ENCODE measurements at regions of chrX and their contacts with region 1.

Region 1: DNA sequence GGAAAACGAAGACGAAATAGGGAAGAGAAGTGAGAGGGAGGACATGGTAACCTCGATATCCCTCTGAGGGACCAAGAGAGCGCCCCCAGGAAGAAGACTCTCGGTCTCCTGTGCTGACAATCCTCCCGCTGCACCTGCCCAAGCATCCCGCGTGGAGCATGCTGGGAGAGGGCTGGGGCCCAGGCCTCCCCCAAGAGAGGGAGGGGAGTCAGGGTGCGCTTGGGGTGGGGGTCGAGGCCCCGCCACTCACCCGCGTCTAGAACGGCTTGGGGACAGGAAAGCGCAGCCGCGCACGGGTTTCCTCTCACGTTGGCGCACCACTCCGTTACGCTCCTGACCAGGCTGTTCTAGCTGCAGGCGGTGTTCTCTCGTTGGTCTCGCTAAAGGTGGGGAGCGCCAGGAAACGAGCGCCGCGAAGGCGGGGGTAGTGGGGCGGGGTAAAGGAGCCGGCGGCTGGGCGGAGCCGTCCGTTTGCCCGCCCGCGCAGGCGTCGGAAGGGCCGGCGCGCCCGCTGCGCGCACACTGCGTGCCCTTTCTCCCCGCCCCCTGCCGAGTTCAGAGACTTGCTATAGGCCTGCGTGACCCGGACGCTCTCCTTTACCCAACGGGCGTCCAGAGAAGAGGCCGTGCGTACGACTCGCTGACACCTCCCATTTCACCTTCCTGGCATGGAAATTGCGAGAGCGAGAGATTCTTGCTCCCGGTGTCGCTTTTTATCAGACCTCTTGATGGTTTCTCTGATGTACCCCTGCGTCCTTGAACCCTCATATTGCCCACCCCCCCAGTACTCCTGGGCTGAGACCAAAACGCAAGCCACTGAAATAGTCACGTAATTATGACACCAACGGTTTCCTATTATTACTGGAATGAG is at the start of gene C1GALT1C1:
- DNase-seq: peak; percentile 83 to 97 (median 90)
- ATAC-seq: peak; percentile 89
- H3K4me3 ChIP-seq: peak within 1 kb of the TSS; percentile 89
- H3K4me3 Mint-ChIP-seq: peak within 1 kb of the TSS; percentile 99
- H3K27ac ChIP-seq: peak within 1 kb of the TSS; percentile 89 to 95
- H3K27ac Mint-ChIP-seq: peak within 1 kb of the TSS; percentile 98
- H3K4me1 ChIP-seq: peaks cover 14% of the 10 kb centered on the region
- H3K4me1 Mint-ChIP-seq: peaks cover 23% of the 10 kb centered on the region
- H3K27me3 ChIP-seq: no peaks in the 10 kb centered on the region
- H3K27me3 Mint-ChIP-seq: no peaks in the 10 kb centered on the region
- CTCF ChIP-seq: no peak
- total RNA-seq, gene C1GALT1C1: 2.3 to 3.3 TPM

Region 2: GRCh38 chrX:119235872-119236622 is 1393.9 kb before region 1 on chrX and contains the start of gene PGRMC1:
- CTCF ChIA-PET with region 1: no interaction called
- POLR2A ChIA-PET with region 1: no interaction called
- intact Hi-C with region 1: loop called in 1 of 2 experiments (anchors 5 kb)
- DNase-seq: peak; percentile 61 to 91 (median 78)
- ATAC-seq: peak; percentile 94
- H3K4me3 ChIP-seq: peak within 1 kb of the TSS; percentile 73
- H3K4me3 Mint-ChIP-seq: peak within 1 kb of the TSS; percentile 92
- H3K27ac ChIP-seq: peak within 1 kb of the TSS in 1 of 2 donors; percentile 53
- H3K27ac Mint-ChIP-seq: peak within 1 kb of the TSS; percentile 57
- H3K4me1 ChIP-seq: peaks cover 21% of the 10 kb centered on the region
- H3K4me1 Mint-ChIP-seq: peaks cover 38% of the 10 kb centered on the region
- H3K27me3 ChIP-seq: no peaks in the 10 kb centered on the region
- H3K27me3 Mint-ChIP-seq: no peaks in the 10 kb centered on the region
- CTCF ChIP-seq: no peak
- total RNA-seq, gene PGRMC1: 14.9 to 16.0 TPM

Region 3: DNA sequence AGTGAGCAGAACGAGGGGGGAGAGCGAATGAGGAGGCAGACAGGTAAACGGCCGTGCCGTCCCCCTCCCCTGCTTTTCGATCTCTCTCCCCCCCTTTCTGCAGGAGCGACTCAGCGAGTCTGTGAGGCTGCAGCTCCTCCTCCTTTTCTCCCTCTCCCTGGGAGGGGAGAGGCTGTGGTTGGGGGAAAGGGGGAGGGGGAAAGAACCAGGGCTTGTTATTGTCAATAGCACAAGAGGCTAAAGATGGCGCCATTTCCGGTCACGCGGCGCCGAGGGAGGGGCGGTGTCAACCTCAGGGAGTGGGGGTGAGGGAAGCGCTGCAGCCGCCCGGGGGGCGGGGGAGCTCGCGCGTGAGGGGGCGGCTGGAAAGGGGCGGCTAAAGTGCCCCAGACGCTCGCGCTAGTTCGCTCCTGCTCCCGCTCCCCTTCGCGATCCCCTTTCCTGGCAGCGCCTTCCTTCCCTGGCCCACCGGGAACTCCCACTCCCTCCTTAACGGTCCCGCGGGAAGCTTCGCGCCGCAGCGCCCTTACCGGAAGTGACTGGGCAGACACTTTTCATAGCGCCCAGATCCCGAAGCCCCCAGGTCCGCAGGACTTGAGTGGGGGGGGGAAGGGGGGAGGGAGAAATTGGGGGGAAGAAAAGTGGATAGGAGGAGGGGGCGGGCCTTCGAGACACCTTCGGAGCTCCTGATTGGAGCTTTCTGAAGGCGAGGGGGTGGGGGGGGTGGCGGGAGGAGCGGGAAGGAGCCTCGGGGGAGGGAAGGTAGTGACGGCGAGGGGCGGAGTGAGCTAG is 68.9 kb before region 1 on chrX and contains the start of gene CUL4B:
- CTCF ChIA-PET with region 1: no interaction called
- POLR2A ChIA-PET with region 1: interaction called, 31 read pairs
- intact Hi-C with region 1: loop called (anchors 1 to 2 kb)
- DNase-seq: peak; percentile 81 to 96 (median 88)
- ATAC-seq: peak; percentile 85
- H3K4me3 ChIP-seq: peak within 1 kb of the TSS; percentile 84
- H3K4me3 Mint-ChIP-seq: peak within 1 kb of the TSS; percentile 97
- H3K27ac ChIP-seq: peak within 1 kb of the TSS; percentile 95 to 97
- H3K27ac Mint-ChIP-seq: peak within 1 kb of the TSS; percentile 90
- H3K4me1 ChIP-seq: peaks cover 9% of the 10 kb centered on the region
- H3K4me1 Mint-ChIP-seq: peaks cover 32% of the 10 kb centered on the region
- H3K27me3 ChIP-seq: no peaks in the 10 kb centered on the region
- H3K27me3 Mint-ChIP-seq: no peaks in the 10 kb centered on the region
- CTCF ChIP-seq: no peak
- total RNA-seq, gene CUL4B: 32.1 to 34.1 TPM

Region 4: DNA sequence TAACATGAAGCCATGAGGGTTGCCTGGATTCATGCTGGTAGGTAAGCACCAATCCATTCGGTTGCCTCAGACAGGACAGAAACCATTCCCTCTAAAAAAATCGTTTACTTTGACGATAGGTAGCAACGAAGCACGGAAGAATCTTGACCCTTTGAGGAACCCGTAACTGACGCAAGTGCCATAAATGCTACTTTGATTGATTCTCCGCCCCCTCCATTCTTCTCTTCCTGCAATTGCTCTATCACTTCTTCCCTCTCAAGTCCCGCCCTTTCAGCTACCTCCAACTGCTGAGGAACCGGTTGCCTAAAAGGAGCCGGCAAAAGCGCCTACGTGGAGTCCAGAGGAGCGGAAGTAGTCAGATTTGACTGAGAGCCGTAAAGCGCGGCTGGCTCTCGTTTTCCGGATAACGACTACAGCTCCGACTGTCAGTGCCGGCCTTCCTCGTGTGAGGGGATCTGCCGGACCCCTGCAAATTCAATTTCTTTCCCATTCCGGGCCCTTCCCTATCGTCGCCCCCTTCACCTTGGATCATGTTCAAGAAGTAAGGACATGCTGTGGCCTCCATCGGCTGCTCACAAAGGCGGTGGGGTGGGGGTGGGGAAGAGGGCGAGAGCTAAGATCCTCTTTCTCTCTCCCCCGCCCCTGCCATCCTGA is 26.1 kb before region 1 on chrX and contains the start of gene MCTS1:
- CTCF ChIA-PET with region 1: interaction called, 3 read pairs
- POLR2A ChIA-PET with region 1: interaction called, 49 read pairs
- intact Hi-C with region 1: loop called (anchors 1 to 2 kb)
- DNase-seq: peak; percentile 56 to 94 (median 66)
- ATAC-seq: peak; percentile 86
- H3K4me3 ChIP-seq: peak within 1 kb of the TSS; percentile 88
- H3K4me3 Mint-ChIP-seq: peak within 1 kb of the TSS; percentile 96
- H3K27ac ChIP-seq: peak within 1 kb of the TSS; percentile 77 to 90
- H3K27ac Mint-ChIP-seq: peak within 1 kb of the TSS; percentile 97
- H3K4me1 ChIP-seq: peaks cover 4% of the 10 kb centered on the region
- H3K4me1 Mint-ChIP-seq: peaks cover 12% of the 10 kb centered on the region
- H3K27me3 ChIP-seq: no peaks in the 10 kb centered on the region
- H3K27me3 Mint-ChIP-seq: no peaks in the 10 kb centered on the region
- CTCF ChIP-seq: no peak
- total RNA-seq, gene MCTS1: 10.1 to 10.9 TPM

Measured in CD4-positive, alpha-beta T cell (primary cell).